GM13977 (cell line): ENCODE measurements at regions of chr4 and their contacts with region 1.

Region 1: GRCh38 chr4:114399105-114399504 is 199.5 kb upstream of the UGT8 start:
- DNase-seq: no peak
- CTCF ChIP-seq: no peak

Region 2: DNA sequence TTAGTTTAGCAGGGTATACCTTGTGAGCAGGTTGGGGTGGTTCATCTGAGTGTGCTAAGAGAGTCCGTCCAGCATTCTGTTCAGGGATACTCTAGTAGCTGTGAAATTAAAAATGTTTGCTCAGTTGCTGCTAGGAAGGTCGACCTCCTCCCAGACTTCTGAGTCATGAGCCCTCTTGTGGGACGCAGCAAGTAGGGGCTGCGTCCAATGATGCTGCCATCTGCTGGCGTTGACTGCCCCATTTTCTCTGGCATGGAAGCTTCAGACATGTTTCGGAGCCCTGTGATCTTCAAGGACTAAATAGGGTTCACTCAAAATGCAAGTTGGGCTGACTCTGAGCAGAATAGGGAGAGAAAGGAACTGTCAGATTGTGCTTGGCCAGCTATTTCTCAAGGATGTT is 218.6 kb before region 1 on chr4:
- in situ Hi-C with region 1: no loop called
- DNase-seq: no peak
- CTCF ChIP-seq: peak; percentile 39

Region 3: GRCh38 chr4:114659386-114660008 is 260.4 kb after region 1 on chr4:
- in situ Hi-C with region 1: loop called (anchors 10 kb)
- DNase-seq: peak; percentile 47
- CTCF ChIP-seq: peak; percentile 90